AG04450 (cell line): ENCODE measurements at regions of chr9 and their contacts with region 1.

Region 1: GRCh38 chr9:131762356-131762932 is 22.6 kb upstream of the RAPGEF1 start:
- DNase-seq: no peak
- H3K4me3 ChIP-seq: no peak overlapping the region
- H3K27ac ChIP-seq: no peak overlapping the region
- H3K27me3 ChIP-seq: peaks cover 40% of the 10 kb centered on the region
- CTCF ChIP-seq: peak; percentile 77

Region 2: DNA sequence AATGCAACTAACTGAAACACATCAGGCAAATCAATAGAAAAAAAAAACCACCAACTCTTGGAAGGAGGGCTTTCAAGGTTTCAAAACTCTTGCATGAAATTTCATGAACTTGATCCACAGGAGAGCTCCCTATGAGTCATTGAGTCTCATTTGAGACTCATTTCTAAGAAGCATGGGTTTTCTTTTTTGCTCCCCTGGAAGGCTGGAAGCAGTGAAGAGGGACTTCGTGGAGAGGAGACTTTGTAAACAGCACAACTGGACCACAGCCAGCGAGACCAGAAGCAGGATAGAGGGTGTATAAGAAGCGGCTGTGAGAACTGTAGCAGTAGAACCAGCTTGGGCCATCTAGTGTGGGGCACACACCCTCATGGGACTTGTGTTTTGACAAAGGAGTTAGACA is 18.6 kb after region 1 on chr9:
- CTCF ChIA-PET with region 1: no interaction called
- POLR2A ChIA-PET with region 1: no interaction called
- DNase-seq: no peak
- H3K4me3 ChIP-seq: no peak overlapping the region
- H3K27ac ChIP-seq: no peak overlapping the region
- H3K27me3 ChIP-seq: peaks cover 22% of the 10 kb centered on the region
- CTCF ChIP-seq: no peak

Region 3: DNA sequence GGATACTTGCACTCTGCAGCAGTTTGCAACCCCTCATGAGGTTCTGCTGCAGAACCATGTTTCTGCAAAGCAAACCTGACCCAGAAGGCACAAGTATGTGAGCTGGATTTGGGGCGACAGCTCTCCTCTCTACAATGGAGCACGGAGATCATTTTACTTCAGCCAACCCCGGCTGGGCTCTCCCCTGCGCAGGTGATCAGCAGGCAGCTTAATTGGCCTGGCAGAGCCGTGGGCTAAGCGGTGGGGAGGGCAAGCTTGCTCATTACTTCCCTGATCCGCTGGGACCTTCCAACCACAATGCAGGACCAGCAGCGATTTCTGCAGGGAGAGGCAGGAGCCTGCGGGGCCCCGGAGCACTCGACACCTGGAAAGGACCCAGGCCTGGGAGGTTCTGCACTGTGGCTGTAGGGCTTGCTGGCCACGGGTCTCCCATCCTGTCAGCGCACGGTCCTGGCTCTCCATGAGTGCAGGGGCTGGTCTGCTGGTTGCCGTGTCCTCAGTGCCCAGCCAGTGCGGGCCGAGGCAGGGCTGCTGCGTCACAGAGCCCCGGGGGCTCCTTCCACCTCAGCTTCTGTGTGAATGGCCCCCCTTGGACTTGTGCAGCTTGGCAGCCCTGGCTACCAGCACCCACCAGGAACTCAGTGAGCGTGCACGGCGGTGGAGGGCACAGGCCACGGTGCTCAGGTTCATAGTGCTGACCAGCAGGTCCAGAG is 29.3 kb after region 1 on chr9:
- CTCF ChIA-PET with region 1: no interaction called
- POLR2A ChIA-PET with region 1: no interaction called
- DNase-seq: no peak
- H3K4me3 ChIP-seq: no peak overlapping the region
- H3K27ac ChIP-seq: no peak overlapping the region
- H3K27me3 ChIP-seq: peaks cover 29% of the 10 kb centered on the region
- CTCF ChIP-seq: no peak

Region 4: GRCh38 chr9:132249123-132249522 is 486.7 kb after region 1 on chr9:
- CTCF ChIA-PET with region 1: interaction called, 43 read pairs
- POLR2A ChIA-PET with region 1: no interaction called
- DNase-seq: no peak
- H3K4me3 ChIP-seq: no peak overlapping the region
- H3K27ac ChIP-seq: no peak overlapping the region
- H3K27me3 ChIP-seq: peaks cover 25% of the 10 kb centered on the region
- CTCF ChIP-seq: no peak

Region 5: GRCh38 chr9:132260846-132261245 is 498.4 kb after region 1 on chr9:
- CTCF ChIA-PET with region 1: interaction called, 43 read pairs
- POLR2A ChIA-PET with region 1: no interaction called
- DNase-seq: no peak
- H3K4me3 ChIP-seq: no peak overlapping the region
- H3K27ac ChIP-seq: no peak overlapping the region
- H3K27me3 ChIP-seq: no peaks in the 10 kb centered on the region
- CTCF ChIP-seq: no peak

Region 6: GRCh38 chr9:132268725-132269352 is 506.4 kb after region 1 on chr9:
- CTCF ChIA-PET with region 1: interaction called, 70 read pairs
- POLR2A ChIA-PET with region 1: no interaction called
- DNase-seq: peak; percentile 32
- H3K4me3 ChIP-seq: no peak overlapping the region
- H3K27ac ChIP-seq: no peak overlapping the region
- H3K27me3 ChIP-seq: no peaks in the 10 kb centered on the region
- CTCF ChIP-seq: peak; percentile 92